ENCODE measurements at regions of chr17 and their contacts with region 1.

Region 1: DNA sequence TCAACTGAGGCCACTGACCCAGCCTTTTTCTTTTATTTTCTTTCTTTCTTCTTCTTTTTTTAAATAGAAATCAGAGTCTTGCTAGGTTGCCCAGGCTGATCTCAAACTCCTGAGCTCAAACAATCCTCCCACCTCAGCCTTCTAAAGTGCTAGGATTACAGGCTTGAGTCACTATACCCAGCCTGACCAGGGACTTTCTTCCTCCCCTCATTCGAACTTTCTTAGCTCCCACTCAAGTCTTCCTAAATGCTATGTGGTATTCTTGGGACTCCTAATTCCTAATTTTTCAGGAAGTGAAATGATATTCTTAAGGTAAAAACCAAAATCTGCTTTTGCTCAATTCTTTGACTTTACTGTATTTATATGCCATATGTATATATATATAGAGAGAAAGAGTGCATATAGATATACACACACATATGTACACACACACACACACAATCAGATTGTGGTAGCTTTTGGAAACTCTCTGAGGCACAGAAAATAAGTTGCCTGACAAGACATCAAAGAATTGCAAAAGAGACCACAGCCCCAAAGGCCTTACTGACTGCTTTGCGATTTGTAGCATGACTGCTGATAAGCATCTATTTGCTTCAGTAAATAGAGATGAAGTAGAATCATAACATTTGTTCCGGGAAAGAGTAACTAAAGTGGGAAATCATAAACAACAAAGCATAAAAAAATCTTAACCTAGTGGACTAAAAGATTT is 9.5 kb upstream of the AMZ2 start:
- DNase-seq: no peak
- H3K4me3 Mint-ChIP-seq: peak overlapping the region; percentile 70
- H3K27ac Mint-ChIP-seq: peak overlapping the region; percentile 97
- H3K4me1 Mint-ChIP-seq: peaks cover 63% of the 10 kb centered on the region
- H3K27me3 Mint-ChIP-seq: no peaks in the 10 kb centered on the region

Region 2: GRCh38 chr17:68255731-68256538 is 17.6 kb after region 1 on chr17:
- CTCF ChIA-PET with region 1: interaction called, 27 read pairs
- POLR2A ChIA-PET with region 1: interaction called, 29 read pairs
- DNase-seq: no peak
- H3K4me3 Mint-ChIP-seq: peak overlapping the region; percentile 39
- H3K27ac Mint-ChIP-seq: peak overlapping the region; percentile 82
- H3K4me1 Mint-ChIP-seq: peaks cover 82% of the 10 kb centered on the region
- H3K27me3 Mint-ChIP-seq: no peaks in the 10 kb centered on the region

Region 3: GRCh38 chr17:68341482-68341881 is 103.2 kb after region 1 on chr17:
- CTCF ChIA-PET with region 1: no interaction called
- POLR2A ChIA-PET with region 1: no interaction called
- DNase-seq: no peak
- H3K4me3 Mint-ChIP-seq: no peak overlapping the region
- H3K27ac Mint-ChIP-seq: no peak overlapping the region
- H3K4me1 Mint-ChIP-seq: peaks cover 45% of the 10 kb centered on the region
- H3K27me3 Mint-ChIP-seq: no peaks in the 10 kb centered on the region